ENCODE measurements at regions of chr9 and their contacts with region 1.

Region 1: DNA sequence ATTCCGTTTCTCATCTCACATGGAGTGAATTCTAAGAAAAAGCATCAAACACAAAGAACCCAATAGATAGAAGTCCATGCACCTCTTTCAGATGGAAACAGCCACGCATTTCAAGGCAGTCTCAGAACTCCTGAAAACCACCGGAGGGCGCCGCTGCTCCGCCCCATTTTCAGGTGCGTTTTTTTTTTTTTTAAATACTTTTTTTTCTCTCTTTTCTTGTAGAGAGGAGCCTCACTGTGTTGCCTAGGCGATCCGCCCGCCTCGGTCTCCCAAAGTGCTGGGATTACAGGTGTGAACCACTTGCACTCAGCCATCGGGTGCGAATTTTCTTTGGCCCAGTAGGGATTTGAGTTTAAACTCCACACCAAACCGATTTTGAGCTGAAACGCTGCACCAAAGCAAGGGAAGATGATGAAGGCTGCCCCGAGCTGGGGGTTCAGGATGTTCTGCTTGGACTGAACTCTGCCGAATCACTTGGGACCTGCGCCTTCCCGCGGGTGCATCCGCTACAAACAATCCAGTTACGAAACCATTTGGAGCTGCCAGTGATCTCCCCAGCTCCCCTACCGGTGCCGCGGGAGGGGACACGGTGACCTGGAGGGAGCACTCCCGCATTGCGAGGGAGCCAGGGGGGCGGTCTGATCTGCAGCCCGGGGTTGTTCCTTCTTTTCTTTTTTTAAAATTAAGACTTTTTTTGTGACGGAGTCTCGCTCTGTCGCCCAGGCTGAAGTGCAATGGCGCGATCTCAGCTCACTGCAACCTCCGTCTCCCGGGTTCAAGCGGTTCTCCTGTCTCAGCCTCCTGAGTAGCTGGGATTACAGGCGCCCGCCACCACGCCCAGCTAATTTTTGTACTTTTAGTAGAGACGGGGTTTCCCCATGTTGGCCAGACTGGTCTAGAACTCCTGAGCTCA is 1.4 kb downstream of the PTGR1 start:
- DNase-seq: peak; percentile 80
- ATAC-seq: peak; percentile 62 to 64
- H3K4me3 ChIP-seq: peak overlapping the region; percentile 74
- H3K27ac ChIP-seq: peak overlapping the region; percentile 87
- H3K4me1 ChIP-seq: peaks cover 8% of the 10 kb centered on the region
- H3K27me3 ChIP-seq: no peaks in the 10 kb centered on the region
- CTCF ChIP-seq: peak; percentile 74

Region 2: DNA sequence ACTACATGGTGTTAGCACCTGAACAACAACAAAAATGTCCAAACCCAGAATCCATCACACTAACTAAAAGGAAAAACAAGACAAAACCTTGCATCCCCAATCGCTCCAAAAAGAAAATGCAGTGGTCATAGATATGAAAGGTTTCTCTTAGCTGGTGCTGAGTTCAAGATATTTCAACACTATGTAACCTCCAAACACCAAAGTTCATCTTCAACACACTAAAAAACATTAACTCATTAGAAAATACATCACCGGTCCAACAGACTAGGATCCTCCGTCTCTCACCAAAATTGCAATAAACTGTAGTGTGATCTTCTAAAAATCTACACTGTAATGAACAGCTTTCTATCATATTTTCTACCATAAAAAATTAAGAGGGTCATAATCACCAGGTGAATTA is 174.7 kb before region 1 on chr9:
- intact Hi-C with region 1: loop called (anchors 5 kb)
- DNase-seq: no peak
- ATAC-seq: no peak
- H3K4me3 ChIP-seq: no peak overlapping the region
- H3K27ac ChIP-seq: no peak overlapping the region
- H3K4me1 ChIP-seq: no peaks in the 10 kb centered on the region
- H3K27me3 ChIP-seq: no peaks in the 10 kb centered on the region
- CTCF ChIP-seq: no peak